ENCODE measurements at regions of chr3 and their contacts with region 1.

Region 1: DNA sequence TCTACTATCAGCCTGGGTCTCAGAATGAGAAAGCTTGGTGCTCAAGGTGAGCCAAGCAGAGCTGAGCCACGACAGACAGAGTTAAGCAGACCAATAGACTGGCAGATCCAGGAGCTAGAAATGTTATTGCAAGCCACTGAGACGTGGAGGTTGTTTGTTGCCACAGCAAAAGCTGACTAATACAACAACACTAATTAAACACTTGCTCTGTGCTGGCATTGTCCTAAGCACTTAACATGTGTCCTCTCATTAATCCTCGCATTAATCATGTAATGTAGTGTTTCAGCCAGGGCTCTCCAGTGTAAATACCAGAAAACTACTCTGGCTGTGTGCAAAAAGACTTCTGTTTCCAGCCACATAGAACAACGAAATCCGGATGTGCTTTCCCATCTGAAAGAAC is 11.6 kb upstream of the SPSB4 start:
- DNase-seq: no peak
- H3K4me3 Mint-ChIP-seq: no peak overlapping the region
- H3K27ac Mint-ChIP-seq: no peak overlapping the region
- H3K4me1 Mint-ChIP-seq: no peaks in the 10 kb centered on the region
- H3K27me3 Mint-ChIP-seq: peaks cover 10% of the 10 kb centered on the region

Region 2: GRCh38 chr3:139267300-139268246 is 1772.0 kb before region 1 on chr3:
- CTCF ChIA-PET with region 1: no interaction called
- intact Hi-C with region 1: no loop called
- DNase-seq: no peak
- H3K4me3 Mint-ChIP-seq: no peak overlapping the region
- H3K27ac Mint-ChIP-seq: no peak overlapping the region
- H3K4me1 Mint-ChIP-seq: no peaks in the 10 kb centered on the region
- H3K27me3 Mint-ChIP-seq: peaks cover 5% of the 10 kb centered on the region

Region 3: DNA sequence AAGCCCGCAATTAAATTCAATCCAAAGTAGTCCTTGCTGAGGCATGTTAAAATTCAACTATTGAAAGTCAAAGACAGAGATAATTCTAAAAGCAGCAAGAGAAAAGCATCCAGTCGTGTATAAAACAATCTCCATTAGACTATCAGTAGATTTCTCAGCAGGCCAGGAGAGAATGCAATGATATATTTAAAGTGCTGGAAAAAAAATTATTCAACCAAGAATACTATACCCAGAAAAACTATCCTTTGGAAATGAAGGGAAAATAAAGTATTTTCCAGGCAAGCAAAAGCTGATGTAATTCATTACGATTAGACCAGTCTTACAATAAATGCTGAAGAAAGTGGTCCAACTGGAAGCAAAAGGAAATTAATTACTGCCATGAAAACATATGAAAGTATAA is 248.2 kb before region 1 on chr3:
- CTCF ChIA-PET with region 1: no interaction called
- intact Hi-C with region 1: no loop called
- DNase-seq: no peak
- H3K4me3 Mint-ChIP-seq: no peak overlapping the region
- H3K27ac Mint-ChIP-seq: no peak overlapping the region
- H3K4me1 Mint-ChIP-seq: no peaks in the 10 kb centered on the region
- H3K27me3 Mint-ChIP-seq: no peaks in the 10 kb centered on the region

Region 4: GRCh38 chr3:141050576-141051442 is 11.2 kb after region 1 on chr3 and contains the start of gene SPSB4:
- CTCF ChIA-PET with region 1: interaction called, 10 read pairs
- intact Hi-C with region 1: no loop called
- DNase-seq: peak; percentile 28
- H3K4me3 Mint-ChIP-seq: peak within 1 kb of the TSS; percentile 58
- H3K27ac Mint-ChIP-seq: no peak within 1 kb of the TSS
- H3K4me1 Mint-ChIP-seq: peaks cover 8% of the 10 kb centered on the region
- H3K27me3 Mint-ChIP-seq: peaks cover 39% of the 10 kb centered on the region
- total RNA-seq, gene SPSB4: not detected

Region 5: GRCh38 chr3:141076797-141077571 is 37.4 kb after region 1 on chr3:
- CTCF ChIA-PET with region 1: no interaction called
- intact Hi-C with region 1: no loop called
- DNase-seq: peak; percentile 62
- H3K4me3 Mint-ChIP-seq: peak overlapping the region; percentile 48
- H3K27ac Mint-ChIP-seq: no peak overlapping the region
- H3K4me1 Mint-ChIP-seq: peaks cover 16% of the 10 kb centered on the region
- H3K27me3 Mint-ChIP-seq: no peaks in the 10 kb centered on the region